IMR-90 (cell line): ENCODE measurements at regions of chr6 and their contacts with region 1.

Region 1: GRCh38 chr6:132530293-132530974 is 7.6 kb upstream of the TAAR9 start:
- DNase-seq: peak; percentile 69
- ATAC-seq: peak; percentile 83
- H3K4me3 ChIP-seq: no peak overlapping the region
- H3K27ac ChIP-seq: no peak overlapping the region
- H3K4me1 ChIP-seq: no peaks in the 10 kb centered on the region
- H3K27me3 ChIP-seq: peaks cover 17% of the 10 kb centered on the region
- CTCF ChIP-seq: peak; percentile 73
- POLR2A ChIP-seq: no peak
- RAD21 ChIP-seq: peak; percentile 70

Region 2: GRCh38 chr6:132768051-132768517 is 237.7 kb after region 1 on chr6:
- CTCF ChIA-PET with region 1: interaction called, 3 read pairs
- POLR2A ChIA-PET with region 1: no interaction called
- dilution Hi-C with region 1: no loop called
- in situ Hi-C with region 1: loop called (anchors 10 kb)
- intact Hi-C with region 1: loop called (anchors 1 kb)
- DNase-seq: no peak
- ATAC-seq: peak; percentile 61
- H3K4me3 ChIP-seq: no peak overlapping the region
- H3K27ac ChIP-seq: no peak overlapping the region
- H3K4me1 ChIP-seq: peaks cover 2% of the 10 kb centered on the region; the same call in 1 of the 2 replicates
- H3K27me3 ChIP-seq: no peaks in the 10 kb centered on the region
- CTCF ChIP-seq: peak; percentile 21; the same call in 1 of the 2 replicates
- POLR2A ChIP-seq: no peak
- RAD21 ChIP-seq: no peak

Region 3: DNA sequence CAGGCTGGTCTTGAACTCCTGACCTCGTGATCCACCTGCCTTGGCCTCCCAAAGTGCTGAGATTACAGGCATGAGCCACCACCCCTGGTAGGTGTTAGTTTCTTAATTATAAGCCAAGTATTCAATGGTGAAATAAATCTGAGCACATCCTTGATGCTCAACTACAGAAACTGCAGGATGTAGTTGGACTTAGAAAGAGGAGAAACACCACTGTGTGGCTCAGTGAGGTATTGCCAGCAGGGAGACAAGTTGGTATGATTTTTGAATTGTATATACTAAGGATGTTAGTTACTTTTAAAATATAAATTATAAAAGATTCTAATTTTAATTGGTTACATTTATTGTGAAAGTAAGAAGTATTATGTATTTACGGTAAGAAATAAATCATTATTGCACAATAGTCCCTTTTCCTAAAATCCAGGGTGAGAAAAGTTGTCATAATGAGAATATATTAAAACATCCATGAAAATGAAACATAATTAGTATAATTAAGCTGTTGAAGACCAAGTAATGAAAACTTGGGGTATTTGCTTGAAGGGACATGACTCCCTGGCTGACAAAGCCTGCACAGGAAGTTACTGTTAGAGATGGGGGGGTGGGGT is 250.4 kb after region 1 on chr6:
- CTCF ChIA-PET with region 1: no interaction called
- POLR2A ChIA-PET with region 1: no interaction called
- dilution Hi-C with region 1: no loop called
- in situ Hi-C with region 1: loop called (anchors 10 kb)
- intact Hi-C with region 1: loop called (anchors 1 kb)
- DNase-seq: peak; percentile 63
- ATAC-seq: peak; percentile 81
- H3K4me3 ChIP-seq: no peak overlapping the region
- H3K27ac ChIP-seq: no peak overlapping the region
- H3K4me1 ChIP-seq: no peaks in the 10 kb centered on the region
- H3K27me3 ChIP-seq: no peaks in the 10 kb centered on the region
- CTCF ChIP-seq: peak; percentile 62
- POLR2A ChIP-seq: no peak
- RAD21 ChIP-seq: peak; percentile 59

Region 4: GRCh38 chr6:132798869-132799538 is 268.6 kb after region 1 on chr6:
- CTCF ChIA-PET with region 1: no interaction called
- POLR2A ChIA-PET with region 1: no interaction called
- dilution Hi-C with region 1: no loop called
- in situ Hi-C with region 1: no loop called
- intact Hi-C with region 1: loop called (anchors 1 kb)
- DNase-seq: peak; percentile 61
- ATAC-seq: peak; percentile 71
- H3K4me3 ChIP-seq: peak overlapping the region; percentile 95
- H3K27ac ChIP-seq: no peak overlapping the region
- H3K4me1 ChIP-seq: no peaks in the 10 kb centered on the region
- H3K27me3 ChIP-seq: peaks cover 4% of the 10 kb centered on the region
- CTCF ChIP-seq: peak; percentile 75
- POLR2A ChIP-seq: no peak
- RAD21 ChIP-seq: peak; percentile 54

Region 5: DNA sequence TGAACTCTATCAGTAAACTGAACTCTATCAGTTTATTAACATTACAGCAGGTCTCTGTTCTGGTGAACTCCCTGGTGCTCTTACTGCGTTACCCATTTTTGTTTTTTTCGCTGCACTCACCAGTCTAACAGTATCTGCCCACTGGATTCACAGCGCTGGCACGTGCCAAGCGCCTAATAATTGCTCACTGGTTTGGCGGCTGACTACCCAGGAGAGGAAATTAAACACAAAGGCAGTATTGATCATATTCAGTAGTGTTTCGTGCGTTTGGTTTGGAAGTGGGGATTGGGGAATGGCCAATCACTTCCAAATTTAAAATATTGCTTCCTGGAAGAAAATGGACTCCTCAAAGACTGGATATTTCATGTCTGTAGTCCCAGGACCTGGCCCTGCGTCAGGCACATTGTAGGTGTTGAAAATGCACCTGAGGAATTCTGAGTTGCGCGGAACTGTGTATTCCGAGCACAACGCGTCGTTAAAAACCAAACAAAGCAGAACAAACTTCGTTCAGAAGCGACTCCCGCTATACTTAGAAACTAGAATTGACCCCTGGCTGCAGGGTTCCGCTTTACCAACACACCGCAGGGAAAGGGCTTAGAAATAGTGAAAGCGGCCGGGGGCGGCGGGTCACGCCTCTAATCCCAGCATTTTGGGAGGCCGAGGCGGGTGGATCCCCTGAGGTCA is 282.9 kb after region 1 on chr6:
- CTCF ChIA-PET with region 1: no interaction called
- POLR2A ChIA-PET with region 1: no interaction called
- dilution Hi-C with region 1: no loop called
- in situ Hi-C with region 1: no loop called
- intact Hi-C with region 1: loop called (anchors 2 kb)
- DNase-seq: no peak
- ATAC-seq: peak; percentile 6
- H3K4me3 ChIP-seq: peak overlapping the region; percentile 73
- H3K27ac ChIP-seq: peak overlapping the region; percentile 95
- H3K4me1 ChIP-seq: peaks cover 2% of the 10 kb centered on the region
- H3K27me3 ChIP-seq: no peaks in the 10 kb centered on the region; the same call in 1 of the 2 replicates
- CTCF ChIP-seq: no peak
- POLR2A ChIP-seq: no peak
- RAD21 ChIP-seq: no peak